Left cardiac atrium (tissue), 4 donors: ENCODE measurements at regions of chr4 and their contacts with region 1.

Region 1: DNA sequence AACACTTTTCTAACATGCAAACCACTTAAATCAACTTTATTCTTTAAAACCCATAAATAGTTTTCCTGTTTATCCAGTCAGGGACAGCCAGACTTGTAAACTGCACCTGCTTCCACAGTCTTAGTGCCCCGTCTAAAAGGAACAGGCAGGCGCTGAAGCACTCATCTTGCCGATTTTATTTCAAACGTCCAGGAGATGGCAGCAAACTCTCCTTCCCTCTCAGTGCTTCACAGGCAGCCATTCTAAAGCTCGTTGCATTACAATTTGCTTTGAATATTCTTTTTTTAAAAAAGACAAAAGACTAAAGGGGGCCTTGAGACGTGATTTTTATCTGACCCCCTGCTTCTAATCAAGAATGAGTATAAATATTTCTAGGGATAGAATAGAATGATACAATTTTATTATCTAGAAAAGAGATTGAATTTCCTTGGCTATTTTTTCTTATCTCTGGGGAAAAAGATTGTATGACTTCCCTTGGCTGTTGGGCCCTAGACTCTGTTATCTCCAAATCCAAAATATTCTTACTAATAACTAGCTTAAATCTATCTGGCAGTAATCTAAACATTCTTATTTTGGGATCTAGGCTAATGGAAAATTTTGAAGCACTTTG is 93.6 kb upstream of the MYOZ2 start:
- DNase-seq: peak; percentile 34
- ATAC-seq: peak; percentile 65 to 77

Region 2: DNA sequence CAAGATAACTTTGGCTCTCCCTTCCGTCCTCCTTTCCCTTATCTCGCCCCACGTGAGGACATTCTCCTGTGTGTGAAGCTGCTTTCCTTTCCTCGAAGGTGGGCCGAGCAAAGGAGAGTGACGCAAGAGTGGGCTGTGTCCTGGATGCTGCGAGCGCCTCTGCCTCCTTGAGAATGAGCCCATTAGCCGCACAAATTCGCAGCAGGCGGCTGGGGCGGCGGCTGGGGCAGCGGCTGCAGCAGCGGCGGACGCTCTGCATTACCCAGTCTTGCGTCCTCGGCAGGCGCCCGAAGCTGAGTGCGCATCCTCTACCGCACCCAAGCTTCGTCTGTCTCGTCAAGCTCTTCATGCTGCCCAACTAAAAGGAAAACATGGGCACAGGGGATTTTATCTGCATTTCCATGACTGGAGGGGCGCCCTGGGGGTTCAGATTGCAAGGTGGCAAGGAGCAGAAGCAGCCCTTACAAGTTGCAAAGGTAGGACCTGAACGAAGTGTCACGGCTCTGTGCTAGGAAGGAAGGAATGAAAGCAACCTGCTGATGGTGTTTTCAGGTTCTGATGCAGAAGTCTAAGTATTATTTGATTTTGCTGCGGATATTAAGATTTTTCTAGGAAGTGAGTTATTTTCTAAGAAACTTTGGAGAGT is 153.3 kb before region 1 on chr4 and contains the start of gene SYNPO2:
- intact Hi-C with region 1: no loop called
- DNase-seq: peak; percentile 88
- ATAC-seq: peak; percentile 90 to 98
- total RNA-seq, gene SYNPO2: 67.6 to 94.4 TPM

Region 3: DNA sequence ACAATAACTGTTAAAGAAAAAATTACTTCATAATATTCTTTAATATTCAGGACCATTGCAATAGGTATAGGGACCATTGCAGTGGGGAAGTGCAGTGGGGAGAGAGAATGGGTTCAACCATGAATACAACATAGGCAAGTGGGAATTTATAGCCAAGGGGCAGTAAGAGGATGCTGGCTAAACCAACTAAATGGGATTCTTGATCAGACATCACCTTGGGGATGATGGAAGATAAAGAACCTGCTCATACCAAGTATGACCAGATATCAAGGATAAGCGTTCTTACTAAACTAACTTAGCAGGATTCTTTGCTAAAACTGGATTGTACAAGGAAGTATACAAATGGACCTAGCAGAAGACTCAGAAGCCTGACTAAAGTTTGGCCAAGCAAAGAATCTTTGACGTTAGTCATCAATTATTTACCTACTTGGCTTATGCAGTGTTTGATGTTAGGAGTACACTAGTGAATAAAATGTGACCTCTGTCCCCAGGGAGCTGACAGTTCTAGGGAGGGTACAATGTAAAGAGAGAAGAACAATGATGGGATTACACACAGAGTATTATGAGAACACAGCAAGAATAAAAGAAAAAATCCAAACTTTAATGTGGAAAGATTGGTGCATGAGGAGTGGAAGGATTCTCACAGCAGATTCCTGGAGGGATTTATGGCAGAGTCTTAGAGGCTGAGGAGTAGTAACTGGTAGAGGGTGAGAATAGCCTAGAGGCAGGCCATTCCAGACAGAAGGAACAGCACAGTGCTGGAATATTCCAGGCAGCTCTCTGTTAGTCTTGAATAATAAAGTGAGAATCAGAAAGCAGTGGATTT is 38.9 kb after region 1 on chr4:
- intact Hi-C with region 1: loop called in 1 of 2 experiments (anchors 2 kb)
- DNase-seq: no peak
- ATAC-seq: no peak

Region 4: DNA sequence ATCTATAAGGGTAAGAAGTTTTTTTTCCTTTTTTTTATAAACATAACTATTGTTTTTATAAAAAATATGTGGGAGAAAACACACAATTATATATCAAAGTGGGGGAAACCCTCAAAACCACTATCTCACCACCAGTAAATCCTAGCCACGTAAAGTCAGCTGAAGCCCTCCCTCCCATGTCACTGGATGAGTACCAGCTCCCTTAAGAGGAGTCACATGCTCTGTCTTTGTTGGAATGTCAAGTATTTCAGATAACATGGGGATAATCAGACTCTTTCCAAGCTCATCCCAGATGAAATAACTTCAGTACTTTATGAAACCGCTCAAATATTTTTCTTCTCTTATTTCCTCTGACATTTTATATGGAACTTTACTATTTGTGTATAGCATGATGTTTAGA is 96.0 kb after region 1 on chr4:
- intact Hi-C with region 1: loop called (anchors 1 to 10 kb)
- DNase-seq: no peak
- ATAC-seq: peak; percentile 71 to 78